Activated CD4-positive, alpha-beta memory T cell treated with anti-CD3 and anti-CD28 coated beads, Interleukin-2, amount 10 ng/mL, durations not matched to agents 7 days and 5 days (primary cell): ENCODE measurements at regions of chr5 and their contacts with region 1.

Region 1: GRCh38 chr5:43484106-43484849 is 613 bp upstream of the TMEM267 start:
- DNase-seq: peak; percentile 90
- H3K4me3 Mint-ChIP-seq: peak overlapping the region; percentile 99
- H3K27ac Mint-ChIP-seq: peak overlapping the region; percentile 100
- H3K4me1 Mint-ChIP-seq: peaks cover 46% of the 10 kb centered on the region
- H3K27me3 Mint-ChIP-seq: no peaks in the 10 kb centered on the region

Region 2: GRCh38 chr5:42994246-42995151 is 489.8 kb before region 1 on chr5:
- CTCF ChIA-PET with region 1: interaction called, 7 read pairs
- POLR2A ChIA-PET with region 1: interaction called, 38 read pairs
- DNase-seq: peak; percentile 91
- H3K4me3 Mint-ChIP-seq: peak overlapping the region; percentile 99
- H3K27ac Mint-ChIP-seq: peak overlapping the region; percentile 100
- H3K4me1 Mint-ChIP-seq: peaks cover 25% of the 10 kb centered on the region
- H3K27me3 Mint-ChIP-seq: no peaks in the 10 kb centered on the region

Region 3: DNA sequence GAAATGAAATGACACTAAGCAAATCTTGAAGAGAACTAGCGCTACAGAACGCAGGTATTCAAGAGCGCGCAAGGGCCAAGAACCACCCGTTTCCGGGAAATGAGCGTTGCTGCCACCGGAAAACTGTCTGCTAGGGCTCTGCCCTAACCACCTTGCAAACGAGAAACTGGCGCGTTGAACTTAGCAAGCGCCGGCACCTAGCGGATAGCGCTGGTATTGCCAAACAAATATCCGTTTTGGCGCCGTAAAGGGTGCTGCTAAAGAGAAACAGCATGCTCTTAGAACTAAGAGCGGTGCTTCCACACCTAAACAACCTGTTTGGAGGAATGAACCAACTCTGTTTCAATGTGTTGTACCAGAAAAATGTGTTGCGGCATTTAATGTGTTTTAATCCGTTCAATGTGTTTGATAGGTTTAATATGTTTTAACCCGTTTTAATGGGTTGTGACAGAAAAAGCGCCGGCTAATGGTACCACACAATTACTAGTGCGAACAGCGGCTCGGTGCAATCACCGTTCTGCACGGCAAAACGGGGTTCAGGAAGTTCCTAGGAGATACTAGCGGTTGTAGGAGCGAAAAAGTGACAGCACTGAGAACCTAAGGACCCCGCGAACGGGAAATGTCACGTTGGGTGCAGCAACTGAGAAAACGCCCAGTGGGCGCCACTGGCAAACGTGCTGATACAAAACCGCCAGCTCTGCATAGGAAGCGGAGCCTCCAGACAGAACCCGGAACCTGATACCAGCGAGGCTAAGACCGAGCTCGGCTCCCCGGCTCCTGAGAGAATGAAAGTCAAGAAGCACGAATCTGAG is 443.8 kb before region 1 on chr5 and contains the start of gene ANXA2R:
- CTCF ChIA-PET with region 1: interaction called, 16 read pairs
- POLR2A ChIA-PET with region 1: interaction called, 89 read pairs
- DNase-seq: peak; percentile 96
- H3K4me3 Mint-ChIP-seq: peak within 1 kb of the TSS; percentile 97
- H3K27ac Mint-ChIP-seq: peak within 1 kb of the TSS; percentile 99
- H3K4me1 Mint-ChIP-seq: peaks cover 42% of the 10 kb centered on the region
- H3K27me3 Mint-ChIP-seq: no peaks in the 10 kb centered on the region
- total RNA-seq, gene ANXA2R: 25.1 to 28.3 TPM

Region 4: DNA sequence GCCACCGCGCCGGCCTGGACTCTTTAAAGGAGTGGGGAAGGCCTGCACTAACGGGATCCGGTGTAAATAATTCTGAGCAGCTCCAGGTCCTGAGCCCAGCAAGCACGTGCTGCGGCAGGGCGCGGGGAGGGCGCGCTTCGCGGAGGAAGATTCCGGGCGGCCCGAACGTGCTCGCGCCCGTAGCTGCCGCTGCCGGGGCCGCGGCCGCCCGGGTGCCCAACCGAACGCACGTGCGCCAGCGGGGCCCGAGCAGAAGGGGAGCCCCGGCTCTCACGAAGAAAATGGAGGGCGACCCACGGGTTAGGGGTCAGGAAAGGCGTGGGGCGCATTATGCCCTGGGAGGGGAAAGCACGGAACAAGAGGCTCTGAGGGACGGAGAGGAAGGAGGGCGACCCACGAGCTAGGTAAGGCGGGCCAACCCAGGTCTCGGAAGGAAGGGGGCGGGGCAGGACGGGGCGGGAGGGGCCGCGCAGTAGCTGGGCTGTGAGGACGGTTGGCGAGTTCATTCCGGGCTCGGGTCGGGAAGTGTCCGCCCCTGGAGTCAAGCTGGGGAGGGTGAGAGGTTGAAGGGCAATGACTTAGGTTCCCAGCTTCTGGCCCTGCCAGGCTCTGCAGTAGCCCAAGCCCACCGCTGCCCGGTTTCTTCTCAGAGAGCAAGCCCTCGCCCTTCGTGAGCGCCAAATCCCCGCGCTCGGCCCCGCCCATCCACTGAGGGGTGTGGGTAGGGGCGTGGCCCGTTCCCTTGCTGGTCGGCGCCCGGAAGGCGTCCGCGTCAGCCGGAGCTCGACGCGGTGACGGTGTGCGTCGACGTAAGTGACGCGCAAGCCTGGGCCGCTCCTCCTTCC is 363.3 kb before region 1 on chr5 and contains the start of gene ZNF131:
- CTCF ChIA-PET with region 1: interaction called, 22 read pairs
- POLR2A ChIA-PET with region 1: interaction called, 88 read pairs
- DNase-seq: peak; percentile 97
- H3K4me3 Mint-ChIP-seq: peak within 1 kb of the TSS; percentile 94
- H3K27ac Mint-ChIP-seq: peak within 1 kb of the TSS; percentile 93
- H3K4me1 Mint-ChIP-seq: peaks cover 39% of the 10 kb centered on the region
- H3K27me3 Mint-ChIP-seq: peaks cover 3% of the 10 kb centered on the region
- total RNA-seq, gene ZNF131: 42.5 to 44.7 TPM

Region 5: DNA sequence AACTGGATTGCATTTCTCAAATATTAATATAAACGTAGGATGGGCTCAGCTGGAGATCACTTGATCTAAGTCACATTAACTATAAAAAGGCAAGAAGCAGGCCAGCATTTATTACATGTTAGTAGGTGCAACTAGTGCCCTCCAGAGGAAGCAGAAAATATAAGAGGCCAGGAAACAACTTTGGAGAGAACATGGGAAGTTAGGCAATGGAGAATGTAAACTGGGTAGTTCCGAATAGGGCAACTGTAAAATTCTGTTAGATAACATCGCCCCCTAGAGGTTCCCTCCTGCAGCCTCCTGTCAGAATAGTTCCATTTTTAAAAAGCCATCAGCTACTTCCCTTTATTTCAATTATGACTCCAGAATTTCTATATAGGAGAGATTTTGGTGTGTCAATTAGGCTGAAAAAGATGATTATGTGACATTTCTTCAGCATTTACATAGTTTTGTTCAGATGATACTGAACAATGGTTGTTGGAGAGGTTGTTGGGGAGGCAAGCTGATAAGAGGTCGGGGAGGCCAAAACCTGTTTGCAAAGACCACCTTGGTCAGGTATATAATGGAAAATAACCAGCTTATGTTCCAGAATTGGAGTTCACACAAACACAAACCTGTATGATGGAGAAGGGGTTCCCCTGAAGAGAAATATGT is 94.5 kb before region 1 on chr5:
- CTCF ChIA-PET with region 1: interaction called, 19 read pairs
- POLR2A ChIA-PET with region 1: interaction called, 20 read pairs
- DNase-seq: peak; percentile 48
- H3K4me3 Mint-ChIP-seq: no peak overlapping the region
- H3K27ac Mint-ChIP-seq: no peak overlapping the region
- H3K4me1 Mint-ChIP-seq: peaks cover 17% of the 10 kb centered on the region
- H3K27me3 Mint-ChIP-seq: no peaks in the 10 kb centered on the region

Region 6: GRCh38 chr5:43514816-43515677 is 30.8 kb after region 1 on chr5 and contains the start of gene C5orf34:
- CTCF ChIA-PET with region 1: interaction called, 20 read pairs
- POLR2A ChIA-PET with region 1: interaction called, 117 read pairs
- DNase-seq: peak; percentile 94
- H3K4me3 Mint-ChIP-seq: peak within 1 kb of the TSS; percentile 94
- H3K27ac Mint-ChIP-seq: peak within 1 kb of the TSS; percentile 97
- H3K4me1 Mint-ChIP-seq: peaks cover 37% of the 10 kb centered on the region
- H3K27me3 Mint-ChIP-seq: no peaks in the 10 kb centered on the region
- total RNA-seq, gene C5orf34: 7.7 to 8.5 TPM

Region 7: DNA sequence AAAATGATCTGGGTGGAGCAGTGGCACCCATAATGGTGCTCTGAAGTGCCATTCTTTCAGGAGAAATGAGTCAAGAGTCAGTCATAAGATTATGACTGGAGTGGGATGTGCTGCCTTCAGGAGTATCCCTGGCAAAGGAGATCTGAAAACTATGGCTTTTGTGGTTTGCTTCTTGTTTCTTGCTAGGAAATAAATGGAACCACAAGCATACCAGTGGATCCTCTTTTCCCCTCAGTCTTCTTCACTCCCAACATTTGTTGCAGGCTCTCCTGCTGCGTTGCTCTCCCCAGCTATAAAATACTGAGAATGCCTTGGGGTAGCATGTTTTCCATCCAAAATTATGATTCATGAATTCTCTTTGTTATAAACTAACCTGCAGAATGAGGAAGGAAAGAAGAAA is 317.8 kb after region 1 on chr5:
- CTCF ChIA-PET with region 1: no interaction called
- POLR2A ChIA-PET with region 1: no interaction called
- DNase-seq: no peak
- H3K4me3 Mint-ChIP-seq: no peak overlapping the region
- H3K27ac Mint-ChIP-seq: no peak overlapping the region
- H3K4me1 Mint-ChIP-seq: no peaks in the 10 kb centered on the region
- H3K27me3 Mint-ChIP-seq: no peaks in the 10 kb centered on the region